Activated T-helper 1 cell treated with anti-CD3 and anti-CD28 coated beads, Interleukin-12 subunit alpha, Interleukin-12 subunit beta, Interleukin-2, Interleukin-4 antibody, amounts not matched to agents 30 ng/mL and 10 ng/mL and 1 ng/mL, durations not matched to agents 14 hours and 24 hours and 36 hours (primary cell): ENCODE measurements at regions of chr18 and their contacts with region 1.

Region 1: DNA sequence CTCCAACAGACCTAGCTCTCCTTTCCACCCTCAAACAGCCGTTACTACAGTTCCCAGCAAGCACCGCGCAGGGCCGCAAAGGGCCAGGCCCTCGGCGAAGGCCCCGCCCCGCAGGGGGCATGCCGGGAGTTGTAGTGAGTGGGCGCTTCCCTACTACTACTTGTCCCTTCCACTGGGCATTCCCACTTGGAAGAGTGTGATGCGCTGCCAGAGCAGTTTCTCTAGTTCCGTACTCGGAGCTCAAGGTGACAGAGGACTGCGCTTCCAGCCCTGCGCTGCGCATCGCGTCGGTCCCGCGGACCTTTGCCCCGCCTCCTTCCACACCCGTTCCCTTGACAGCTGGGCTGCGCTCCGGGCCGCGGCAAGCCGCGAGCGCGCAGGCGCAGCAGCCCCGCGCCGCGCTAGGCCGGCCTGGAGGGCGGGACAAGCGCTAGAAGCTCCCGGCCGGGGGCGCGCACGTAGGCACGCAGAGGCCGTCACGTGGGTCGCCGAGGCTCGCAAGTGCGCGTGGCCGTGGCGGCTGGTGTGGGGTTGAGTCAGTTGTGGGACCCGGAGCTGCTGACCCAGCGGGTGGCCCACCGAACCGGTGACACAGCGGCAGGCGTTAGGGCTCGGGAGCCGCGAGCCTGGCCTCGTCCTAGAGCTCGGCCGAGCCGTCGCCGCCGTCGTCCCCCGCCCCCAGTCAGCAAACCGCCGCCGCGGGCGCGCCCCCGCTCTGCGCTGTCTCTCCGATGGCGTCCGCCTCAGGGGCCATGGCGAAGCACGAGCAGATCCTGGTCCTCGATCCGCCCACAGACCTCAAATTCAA is at the start of gene VAPA:
- DNase-seq: peak; percentile 92
- H3K4me3 Mint-ChIP-seq: peak within 1 kb of the TSS; percentile 91
- H3K27ac Mint-ChIP-seq: peak within 1 kb of the TSS; percentile 94
- H3K4me1 Mint-ChIP-seq: peaks cover 27% of the 10 kb centered on the region
- H3K27me3 Mint-ChIP-seq: peaks cover 9% of the 10 kb centered on the region
- total RNA-seq, gene VAPA: 187 and 201 TPM in 2 replicates

Region 2: DNA sequence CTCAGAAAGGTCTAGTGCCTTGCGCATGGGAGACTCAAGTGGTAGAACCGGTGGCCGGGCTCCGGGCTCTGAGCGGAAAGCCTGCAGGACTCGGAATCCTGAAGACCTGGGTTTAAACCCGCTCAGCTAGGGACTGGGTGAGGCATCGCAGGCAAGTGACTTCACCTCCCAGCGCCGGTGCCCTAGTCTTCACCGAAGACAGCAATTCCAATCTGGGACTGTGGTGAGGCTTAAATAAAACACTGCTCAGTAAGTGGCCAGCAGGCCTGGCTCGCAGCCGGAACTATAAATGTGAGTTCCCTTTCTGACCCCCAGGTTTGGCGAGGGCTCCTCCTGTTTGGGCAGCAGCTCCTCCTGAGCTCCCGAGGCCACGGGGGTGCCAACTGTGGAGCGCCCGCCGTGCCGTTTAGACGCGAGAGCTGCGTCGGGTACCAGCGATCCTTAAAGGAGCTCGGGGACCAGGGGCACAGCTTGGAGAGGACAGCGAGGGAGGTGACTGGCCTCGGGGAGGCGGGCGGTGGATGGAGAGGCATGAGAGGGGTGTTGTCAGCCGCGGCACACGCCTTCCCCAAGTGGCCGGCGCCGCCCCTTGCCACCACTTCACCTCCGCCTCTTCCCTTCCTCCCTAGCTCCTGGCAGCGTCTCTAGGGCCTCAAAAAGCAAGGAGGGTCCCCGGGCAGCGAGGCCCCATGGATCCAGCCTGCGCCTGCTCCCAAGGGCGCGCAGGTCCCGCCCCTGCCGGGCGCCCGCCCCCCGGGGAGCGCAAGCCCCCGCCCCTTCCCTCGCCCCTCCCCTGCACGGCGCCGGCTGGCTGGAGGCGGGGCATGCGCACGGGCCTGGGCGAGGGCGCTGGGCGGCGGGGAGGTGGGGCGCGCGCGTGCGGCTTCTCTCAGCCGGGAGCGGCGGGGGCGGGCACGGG is 1209.1 kb before region 1 on chr18:
- intact Hi-C with region 1: loop called (anchors 10 kb)
- DNase-seq: peak; percentile 80
- H3K4me3 Mint-ChIP-seq: peak overlapping the region; percentile 89
- H3K27ac Mint-ChIP-seq: peak overlapping the region; percentile 23
- H3K4me1 Mint-ChIP-seq: peaks cover 14% of the 10 kb centered on the region
- H3K27me3 Mint-ChIP-seq: peaks cover 69% of the 10 kb centered on the region

Region 3: DNA sequence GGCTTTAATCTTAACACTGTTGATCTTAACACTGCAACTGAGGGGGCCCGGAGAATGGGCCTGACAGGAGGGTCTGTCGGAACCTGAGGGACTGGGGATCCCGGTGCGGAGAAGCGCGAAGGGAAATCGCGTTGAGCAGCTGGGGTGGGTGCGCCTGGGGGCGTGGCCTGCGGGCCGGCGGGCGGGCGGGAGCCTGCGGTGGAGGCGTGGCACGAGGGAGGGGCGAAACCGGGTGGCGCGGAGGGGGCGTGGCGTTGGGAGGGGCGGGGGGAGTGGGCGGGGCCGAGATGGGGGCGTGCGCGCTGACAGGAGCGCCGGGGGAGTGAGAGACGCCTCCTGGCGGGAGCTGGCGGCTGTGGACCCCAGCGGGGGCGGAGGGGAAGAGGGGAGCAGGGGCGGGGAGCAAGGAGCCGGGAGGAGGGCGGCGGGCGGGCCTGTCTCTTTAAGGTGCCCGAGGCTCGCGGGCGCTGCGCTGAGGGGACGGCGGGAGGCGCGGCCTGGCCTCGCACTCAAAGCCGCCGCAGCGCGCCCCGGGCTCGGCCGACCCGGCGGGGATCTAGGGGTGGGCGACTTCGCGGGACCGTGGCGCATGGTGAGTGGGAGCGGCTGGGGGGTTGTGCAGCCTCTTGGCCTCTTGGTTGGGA is 579.3 kb before region 1 on chr18 and contains the start of gene TWSG1:
- intact Hi-C with region 1: loop called (anchors 1 kb)
- DNase-seq: peak; percentile 88
- H3K4me3 Mint-ChIP-seq: peak within 1 kb of the TSS; percentile 92
- H3K27ac Mint-ChIP-seq: peak within 1 kb of the TSS; percentile 49
- H3K4me1 Mint-ChIP-seq: peaks cover 33% of the 10 kb centered on the region
- H3K27me3 Mint-ChIP-seq: peaks cover 33% of the 10 kb centered on the region
- total RNA-seq, gene TWSG1: 10.6 and 11.3 TPM in 2 replicates

Region 4: DNA sequence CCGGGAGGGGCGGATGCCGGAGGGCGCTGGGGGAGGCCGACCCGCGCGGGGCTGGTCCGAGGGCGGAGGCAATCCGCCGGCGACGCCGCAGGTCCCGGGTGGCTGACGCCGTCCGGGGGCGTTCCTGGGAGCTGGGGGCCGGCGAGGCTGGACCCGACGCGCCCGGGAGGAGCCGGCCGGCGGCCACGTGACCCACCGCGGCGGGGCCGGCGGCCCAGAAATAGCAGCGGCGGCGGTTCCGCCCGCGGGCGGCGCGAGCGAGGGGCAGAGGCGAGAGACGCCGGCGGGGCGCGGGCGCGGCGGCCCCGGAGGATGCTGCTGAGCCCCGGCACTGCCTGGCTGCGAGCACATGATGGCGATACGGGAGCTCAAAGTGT is 205.7 kb before region 1 on chr18 and contains the start of gene RAB31:
- intact Hi-C with region 1: loop called (anchors 2 kb)
- DNase-seq: no peak
- H3K4me3 Mint-ChIP-seq: peak within 1 kb of the TSS; percentile 80
- H3K27ac Mint-ChIP-seq: no peak within 1 kb of the TSS
- H3K4me1 Mint-ChIP-seq: peaks cover 39% of the 10 kb centered on the region
- H3K27me3 Mint-ChIP-seq: peaks cover 79% of the 10 kb centered on the region
- total RNA-seq, gene RAB31: 0.13 and 0.78 TPM in 2 replicates

Region 5: DNA sequence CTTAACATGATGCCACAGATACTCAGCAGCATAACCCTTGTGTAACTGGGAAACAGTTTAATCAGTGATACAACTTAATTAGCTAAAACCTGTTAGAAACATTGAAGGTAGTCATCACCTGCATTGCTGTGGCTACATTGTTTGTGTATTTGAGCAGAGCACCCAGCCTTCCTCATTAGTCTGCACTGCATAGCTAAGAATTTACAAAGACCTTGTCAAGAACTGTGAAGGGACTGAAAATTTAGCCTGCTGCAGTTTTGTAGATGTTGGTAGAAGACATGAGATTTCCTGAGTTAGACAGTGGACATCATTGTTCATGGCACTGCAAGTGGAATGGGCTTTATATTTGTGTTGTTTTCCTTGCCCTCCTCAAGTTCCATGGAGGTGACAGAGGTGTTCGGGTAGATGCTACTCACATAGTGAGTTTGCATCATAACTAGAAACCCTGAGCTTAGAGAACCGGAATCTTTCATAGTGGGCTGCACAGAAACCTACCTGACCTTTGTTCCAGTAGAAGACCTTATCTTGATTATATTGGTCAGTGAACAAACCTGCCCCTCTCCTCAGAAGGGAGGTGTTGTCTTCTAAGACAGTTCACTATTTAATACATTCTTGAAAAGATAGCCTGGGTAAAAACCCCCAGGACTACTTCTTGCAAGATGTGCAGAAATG is 12.6 kb after region 1 on chr18:
- intact Hi-C with region 1: loop called (anchors 2 kb)
- DNase-seq: no peak
- H3K4me3 Mint-ChIP-seq: no peak overlapping the region
- H3K27ac Mint-ChIP-seq: no peak overlapping the region
- H3K4me1 Mint-ChIP-seq: peaks cover 50% of the 10 kb centered on the region
- H3K27me3 Mint-ChIP-seq: no peaks in the 10 kb centered on the region

Region 6: GRCh38 chr18:10226971-10227370 is 313.2 kb after region 1 on chr18:
- intact Hi-C with region 1: no loop called
- DNase-seq: no peak
- H3K4me3 Mint-ChIP-seq: no peak overlapping the region
- H3K27ac Mint-ChIP-seq: no peak overlapping the region
- H3K4me1 Mint-ChIP-seq: no peaks in the 10 kb centered on the region
- H3K27me3 Mint-ChIP-seq: no peaks in the 10 kb centered on the region

Region 7: GRCh38 chr18:10787293-10787901 is 873.7 kb after region 1 on chr18:
- intact Hi-C with region 1: loop called (anchors 1 kb)
- DNase-seq: peak; percentile 79
- H3K4me3 Mint-ChIP-seq: no peak overlapping the region
- H3K27ac Mint-ChIP-seq: no peak overlapping the region
- H3K4me1 Mint-ChIP-seq: peaks cover 12% of the 10 kb centered on the region
- H3K27me3 Mint-ChIP-seq: peaks cover 49% of the 10 kb centered on the region